Naive thymus-derived CD4-positive, alpha-beta T cell (primary cell): ENCODE measurements at regions of chr3 and their contacts with region 1.

Region 1: DNA sequence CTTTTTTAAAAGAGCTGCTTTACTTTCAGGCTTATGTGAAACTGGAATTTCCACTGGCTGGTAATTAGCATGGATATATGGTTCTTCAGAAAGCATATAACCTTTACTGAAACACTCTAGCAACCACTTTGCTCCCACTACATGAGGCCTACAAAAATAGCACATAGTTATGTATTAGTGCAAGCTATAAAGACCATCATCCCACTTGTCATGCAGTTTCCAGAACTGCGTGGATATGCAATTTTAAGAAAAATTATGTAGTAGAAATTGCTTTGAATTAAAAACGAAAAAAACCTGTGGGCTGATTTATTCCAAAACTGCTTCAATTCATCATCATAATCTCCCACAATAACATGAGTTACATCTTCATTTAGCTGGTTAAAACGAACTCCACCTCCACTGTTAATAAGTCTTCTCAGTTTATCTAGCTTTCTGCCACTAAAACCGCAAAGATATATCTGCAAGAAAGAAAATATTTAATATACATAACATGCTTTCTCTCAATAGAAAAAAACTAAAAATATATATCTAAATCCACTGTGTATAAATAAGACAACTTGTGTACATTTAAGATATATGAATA is 12.2 kb downstream of the TOPBP1 start:
- DNase-seq: no peak
- ATAC-seq: no peak
- H3K4me3 ChIP-seq: no peak overlapping the region
- H3K4me3 Mint-ChIP-seq: no peak overlapping the region
- H3K27ac ChIP-seq: no peak overlapping the region
- H3K27ac Mint-ChIP-seq: no peak overlapping the region
- H3K4me1 ChIP-seq: no peaks in the 10 kb centered on the region
- H3K4me1 Mint-ChIP-seq: peaks cover 0 to 15% (median 0%) of the 10 kb centered on the region in 7 donors
- H3K27me3 ChIP-seq: no peaks in the 10 kb centered on the region
- H3K27me3 Mint-ChIP-seq: no peaks in the 10 kb centered on the region

Region 2: DNA sequence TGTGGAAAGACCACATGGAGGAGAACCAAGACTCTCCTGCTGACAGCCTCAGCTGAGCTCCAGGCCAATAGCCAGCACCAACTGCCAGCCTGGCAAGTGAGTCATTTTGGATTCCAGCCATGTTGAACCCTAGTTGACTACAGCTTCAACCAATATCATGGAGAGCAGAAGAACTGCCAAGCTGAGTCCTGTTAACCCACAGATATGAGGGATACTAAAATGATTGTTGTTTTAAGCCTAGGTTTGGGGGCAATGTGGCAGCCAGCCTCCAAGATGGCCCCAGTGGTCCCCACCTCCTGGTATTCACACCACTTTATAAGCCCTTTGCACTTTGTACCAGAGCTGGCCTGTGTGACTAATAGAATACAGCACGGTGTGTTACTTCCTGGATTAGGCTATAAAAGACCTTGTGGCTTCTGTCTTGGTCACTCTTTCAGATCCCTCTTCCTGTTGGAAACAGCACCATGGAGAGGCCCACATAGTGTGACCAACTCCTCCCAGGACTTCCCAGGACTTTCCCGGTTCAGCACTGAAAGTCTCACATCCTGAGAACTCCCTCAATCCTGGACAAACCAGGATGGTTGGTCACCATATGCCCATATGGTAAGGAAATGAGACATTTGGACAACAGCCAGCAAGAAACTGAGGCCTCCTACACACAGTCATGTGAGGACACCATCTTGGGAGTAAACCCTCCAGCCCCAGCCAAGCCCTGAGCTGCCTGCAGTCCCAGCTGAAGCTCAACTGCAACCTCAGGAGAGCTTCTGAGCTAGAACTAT is 108.5 kb before region 1 on chr3:
- CTCF ChIA-PET with region 1: no interaction called
- POLR2A ChIA-PET with region 1: no interaction called
- intact Hi-C with region 1: no loop called
- DNase-seq: no peak
- ATAC-seq: no peak
- H3K4me3 ChIP-seq: no peak overlapping the region
- H3K4me3 Mint-ChIP-seq: no peak overlapping the region
- H3K27ac ChIP-seq: no peak overlapping the region
- H3K27ac Mint-ChIP-seq: no peak overlapping the region
- H3K4me1 ChIP-seq: no peaks in the 10 kb centered on the region
- H3K4me1 Mint-ChIP-seq: peaks cover 0 to 2% (median 0%) of the 10 kb centered on the region in 7 donors
- H3K27me3 ChIP-seq: no peaks in the 10 kb centered on the region
- H3K27me3 Mint-ChIP-seq: no peaks in the 10 kb centered on the region

Region 3: DNA sequence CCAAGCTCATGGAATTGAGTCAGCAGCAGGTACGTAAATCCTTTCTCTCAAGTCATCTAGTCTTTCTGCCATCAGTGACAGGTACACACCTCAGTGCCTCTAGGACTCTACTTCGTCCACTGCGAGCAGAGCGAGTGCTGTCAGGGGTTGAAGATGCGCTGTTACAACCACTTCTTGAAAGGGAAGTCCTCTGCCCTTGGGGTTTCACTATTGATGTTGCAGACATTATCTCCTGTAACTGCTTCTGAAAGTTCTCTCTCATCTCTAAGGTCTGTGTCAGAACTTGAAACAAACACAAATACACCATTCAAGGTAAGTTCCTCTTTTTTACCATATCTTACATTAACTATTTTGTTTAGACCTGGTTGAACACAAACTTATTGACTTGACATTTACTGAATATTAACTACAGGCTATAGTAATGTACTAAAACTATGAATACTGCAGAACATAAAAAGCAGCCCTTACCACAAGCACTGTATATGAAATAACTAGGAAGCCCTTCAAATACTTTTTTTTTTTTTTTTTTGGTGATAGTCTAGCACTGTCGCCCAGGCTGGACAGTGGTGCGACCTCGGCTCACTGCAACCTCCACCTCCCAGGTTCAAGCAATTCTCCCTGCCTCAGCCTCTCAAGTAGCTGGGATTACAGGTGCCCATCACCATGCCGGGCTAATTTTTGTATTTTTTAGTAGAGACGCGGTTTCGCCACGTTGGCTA is 29.4 kb before region 1 on chr3:
- CTCF ChIA-PET with region 1: no interaction called
- POLR2A ChIA-PET with region 1: no interaction called
- intact Hi-C with region 1: loop called in 1 of 2 experiments (anchors 5 kb)
- DNase-seq: no peak
- ATAC-seq: peak; percentile 31
- H3K4me3 ChIP-seq: no peak overlapping the region
- H3K4me3 Mint-ChIP-seq: no peak overlapping the region
- H3K27ac ChIP-seq: no peak overlapping the region
- H3K27ac Mint-ChIP-seq: peak overlapping the region in 2 of 9 donors; percentile 38 to 44
- H3K4me1 ChIP-seq: no peaks in the 10 kb centered on the region
- H3K4me1 Mint-ChIP-seq: peaks cover 0 to 5% (median 0%) of the 10 kb centered on the region in 7 donors
- H3K27me3 ChIP-seq: no peaks in the 10 kb centered on the region
- H3K27me3 Mint-ChIP-seq: no peaks in the 10 kb centered on the region

Region 4: GRCh38 chr3:133763797-133764683 is 114.5 kb after region 1 on chr3:
- CTCF ChIA-PET with region 1: no interaction called
- POLR2A ChIA-PET with region 1: no interaction called
- intact Hi-C with region 1: no loop called
- DNase-seq: no peak
- ATAC-seq: no peak
- H3K4me3 ChIP-seq: no peak overlapping the region
- H3K4me3 Mint-ChIP-seq: no peak overlapping the region
- H3K27ac ChIP-seq: no peak overlapping the region
- H3K27ac Mint-ChIP-seq: no peak overlapping the region
- H3K4me1 ChIP-seq: no peaks in the 10 kb centered on the region
- H3K4me1 Mint-ChIP-seq: no peaks in the 10 kb centered on the region
- H3K27me3 ChIP-seq: no peaks in the 10 kb centered on the region
- H3K27me3 Mint-ChIP-seq: peaks cover 0 to 24% (median 7%) of the 10 kb centered on the region in 5 donors